Sigmoid colon (tissue), 7 donors: ENCODE measurements at regions of chr18 and their contacts with region 1.

Region 1: DNA sequence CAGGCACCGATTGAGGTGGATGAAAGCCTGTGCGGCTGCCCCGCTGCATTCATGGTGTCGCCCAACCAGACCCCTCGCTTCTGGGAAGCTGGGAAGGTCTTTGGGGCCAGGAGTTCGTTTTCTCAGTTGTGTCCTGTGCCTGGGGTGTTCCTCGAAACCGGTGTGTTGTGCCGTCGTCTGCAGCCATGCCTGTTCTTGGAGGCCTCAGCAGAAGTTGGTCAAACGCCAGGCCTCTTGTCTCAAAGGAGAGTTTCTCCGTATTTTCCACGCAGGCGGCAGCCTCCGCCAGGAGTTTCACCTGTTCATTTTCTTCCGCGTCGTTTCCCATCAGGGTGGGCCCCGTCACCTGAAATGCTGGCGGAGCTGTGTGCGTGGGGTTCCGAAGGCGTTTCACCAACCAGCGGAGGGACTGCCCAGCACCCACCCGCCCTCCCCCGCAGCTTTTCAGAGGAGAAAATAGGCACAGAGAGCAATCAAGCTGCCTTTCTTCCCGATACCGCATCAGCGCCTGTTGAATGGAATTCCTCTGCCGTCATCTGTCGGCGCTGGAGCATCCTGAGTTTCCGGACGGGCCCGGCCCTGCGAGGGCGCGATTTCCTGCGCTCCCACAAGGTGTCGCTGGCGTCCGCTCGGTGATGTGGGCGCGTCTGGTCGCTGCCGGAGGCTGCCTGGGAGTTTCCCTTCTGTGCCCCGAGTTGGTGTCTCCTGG is 17.0 kb upstream of the NFATC1 start:
- DNase-seq: peak; percentile 90
- H3K4me3 ChIP-seq: no peak overlapping the region
- H3K27ac ChIP-seq: no peak overlapping the region
- H3K4me1 ChIP-seq: peaks cover 0 to 8% (median 4%) of the 10 kb centered on the region in 4 donors
- H3K27me3 ChIP-seq: no peaks in the 10 kb centered on the region
- CTCF ChIP-seq: peak; percentile 94 to 95 (median 94)
- EP300 ChIP-seq: no peak
- POLR2A ChIP-seq: no peak

Region 2: DNA sequence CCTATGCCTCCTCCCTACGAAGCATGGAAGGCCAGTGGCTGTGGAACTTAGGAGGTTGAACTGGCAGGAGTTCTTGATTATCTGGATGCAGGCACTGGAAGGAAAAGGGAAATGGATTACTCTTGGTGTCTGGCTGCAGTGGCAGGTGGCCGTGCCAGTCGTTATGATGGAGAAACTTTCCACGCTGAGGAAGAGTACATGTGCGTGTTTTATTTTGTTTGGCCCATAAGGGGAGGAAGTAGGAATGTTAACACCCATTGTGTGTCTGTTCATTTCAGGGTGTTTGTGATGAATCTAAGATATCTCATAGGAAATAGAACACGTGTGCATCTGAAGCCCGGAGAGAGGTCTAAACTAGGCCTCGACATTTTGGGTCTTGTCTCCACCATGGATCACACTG is 105.8 kb before region 1 on chr18:
- intact Hi-C with region 1: no loop called
- DNase-seq: no peak
- H3K4me3 ChIP-seq: no peak overlapping the region
- H3K27ac ChIP-seq: no peak overlapping the region
- H3K4me1 ChIP-seq: no peaks in the 10 kb centered on the region
- H3K27me3 ChIP-seq: no peaks in the 10 kb centered on the region
- CTCF ChIP-seq: no peak
- EP300 ChIP-seq: no peak
- POLR2A ChIP-seq: no peak

Region 3: DNA sequence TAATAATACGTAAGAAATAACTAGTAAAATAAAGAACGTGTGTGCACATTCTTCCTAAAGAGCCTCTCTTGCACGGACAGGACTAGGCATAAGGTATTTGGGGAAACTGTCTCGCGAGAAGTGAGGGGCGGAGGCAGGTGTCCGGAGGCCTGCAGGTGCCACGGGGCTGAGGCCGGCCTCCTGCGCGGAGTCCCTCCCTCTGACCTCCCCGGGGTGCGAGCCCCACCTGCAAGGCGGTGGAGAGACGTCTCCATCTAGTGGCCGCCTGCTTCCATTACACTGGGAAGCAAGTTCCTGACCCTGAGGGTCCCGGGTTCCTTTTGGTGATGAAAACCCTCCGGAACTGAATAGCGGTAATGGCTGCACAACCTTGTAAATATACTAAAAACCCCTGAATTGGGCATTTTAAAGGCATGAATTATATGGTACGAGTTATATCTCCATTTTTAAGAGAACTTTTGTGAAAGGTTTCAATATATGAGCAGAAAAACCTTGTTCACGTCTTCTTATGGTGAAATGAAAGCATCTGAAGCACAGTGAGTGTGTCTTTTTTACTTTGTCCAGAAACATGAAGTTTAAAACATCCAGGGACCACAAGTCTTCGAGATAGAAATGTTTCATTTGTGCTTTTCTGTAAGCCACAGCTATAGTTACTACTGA is 265.4 kb after region 1 on chr18:
- intact Hi-C with region 1: loop called (anchors 1 kb)
- DNase-seq: peak; percentile 79
- H3K4me3 ChIP-seq: no peak overlapping the region
- H3K27ac ChIP-seq: no peak overlapping the region
- H3K4me1 ChIP-seq: peaks cover 0 to 6% (median 0%) of the 10 kb centered on the region in 4 donors
- H3K27me3 ChIP-seq: peaks cover 0 to 5% (median 4%) of the 10 kb centered on the region in 3 donors
- CTCF ChIP-seq: peak; percentile 77 to 98 (median 92)
- EP300 ChIP-seq: no peak
- POLR2A ChIP-seq: no peak